ENCODE measurements at regions of chr7 and their contacts with region 1.

Region 1: GRCh38 chr7:101410743-101411507 is 48.2 kb downstream of the COL26A1 start:
- DNase-seq: peak in 2 of 3 donors; percentile 36 to 69
- H3K4me3 ChIP-seq: peak overlapping the region in 2 of 7 experiments; percentile 30 to 47
- H3K27ac ChIP-seq: no peak overlapping the region
- H3K4me1 ChIP-seq: peaks cover 0 to 13% (median 11%) of the 10 kb centered on the region in 4 experiments
- H3K27me3 ChIP-seq: no peaks in the 10 kb centered on the region

Region 2: GRCh38 chr7:101373812-101374614 is 36.9 kb before region 1 on chr7:
- CTCF ChIA-PET with region 1: interaction called, 11 read pairs
- POLR2A ChIA-PET with region 1: no interaction called
- DNase-seq: no peak
- H3K4me3 ChIP-seq: no peak overlapping the region
- H3K27ac ChIP-seq: no peak overlapping the region
- H3K4me1 ChIP-seq: peaks cover 0 to 10% (median 5%) of the 10 kb centered on the region in 4 experiments
- H3K27me3 ChIP-seq: peaks cover 0 to 14% (median 11%) of the 10 kb centered on the region in 5 experiments

Region 3: GRCh38 chr7:101390901-101391301 is 20.0 kb before region 1 on chr7:
- CTCF ChIA-PET with region 1: interaction called, 35 read pairs
- POLR2A ChIA-PET with region 1: no interaction called
- DNase-seq: peak; percentile 52 to 90 (median 89)
- H3K4me3 ChIP-seq: peak overlapping the region in 2 of 7 experiments; percentile 25 to 48
- H3K27ac ChIP-seq: peak overlapping the region in 1 of 2 experiments; percentile 49
- H3K4me1 ChIP-seq: peaks cover 0 to 34% (median 31%) of the 10 kb centered on the region in 4 experiments
- H3K27me3 ChIP-seq: peaks cover 0 to 2% (median 0%) of the 10 kb centered on the region in 5 experiments

Region 4: DNA sequence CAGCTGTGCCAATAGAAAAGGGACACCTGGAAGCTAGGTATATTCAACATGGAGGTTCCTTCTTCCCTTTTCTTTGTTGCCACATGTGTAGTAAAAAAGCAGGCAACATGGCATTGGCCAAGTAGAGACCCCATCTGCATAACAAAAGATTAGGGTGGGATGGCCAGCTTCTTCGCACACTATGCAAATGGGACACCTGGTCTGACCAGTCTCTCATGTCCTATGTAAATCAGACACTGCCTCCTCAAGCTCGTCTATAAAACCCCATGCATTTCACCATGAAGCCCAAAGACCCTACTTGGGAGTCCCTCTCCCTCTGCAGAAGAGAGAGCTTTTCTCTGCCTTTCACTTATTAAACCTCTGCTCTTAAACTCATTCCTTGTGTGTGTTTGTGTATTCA is 164.2 kb after region 1 on chr7:
- CTCF ChIA-PET with region 1: no interaction called
- POLR2A ChIA-PET with region 1: no interaction called
- DNase-seq: no peak
- H3K4me3 ChIP-seq: no peak overlapping the region
- H3K27ac ChIP-seq: no peak overlapping the region
- H3K4me1 ChIP-seq: peaks cover 0 to 11% (median 4%) of the 10 kb centered on the region in 4 experiments
- H3K27me3 ChIP-seq: no peaks in the 10 kb centered on the region